Body of pancreas (tissue), 4 donors: ENCODE measurements at regions of chr16 and their contacts with region 1.

Region 1: DNA sequence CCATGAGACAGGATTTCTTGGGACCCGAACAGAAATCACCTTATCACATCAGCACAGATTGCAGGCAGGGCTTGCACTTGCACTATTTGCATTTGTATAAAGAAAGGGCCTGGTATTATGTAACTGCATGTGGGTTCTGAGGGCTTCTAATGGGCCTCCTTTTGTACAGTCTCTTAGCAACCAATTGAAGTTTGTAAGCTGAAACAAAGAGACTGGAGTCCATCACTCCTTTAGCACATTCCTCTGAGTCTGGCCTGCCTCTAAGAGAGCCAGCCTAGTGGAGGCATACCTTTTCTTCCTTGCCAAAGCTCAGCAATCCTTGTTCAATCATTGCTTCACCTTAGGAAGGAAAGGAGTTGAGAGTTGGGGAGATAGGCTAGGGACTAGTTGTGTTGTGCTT is 387.1 kb downstream of the XYLT1 start:
- DNase-seq: no peak
- ATAC-seq: no peak
- H3K4me3 ChIP-seq: no peak overlapping the region
- H3K27ac ChIP-seq: no peak overlapping the region
- H3K4me1 ChIP-seq: no peaks in the 10 kb centered on the region
- H3K27me3 ChIP-seq: no peaks in the 10 kb centered on the region
- CTCF ChIP-seq: no peak
- POLR2A ChIP-seq: no peak

Region 2: GRCh38 chr16:17002565-17002964 is 81.1 kb before region 1 on chr16:
- intact Hi-C with region 1: no loop called
- DNase-seq: no peak
- ATAC-seq: no peak
- H3K4me3 ChIP-seq: no peak overlapping the region
- H3K27ac ChIP-seq: no peak overlapping the region
- H3K4me1 ChIP-seq: no peaks in the 10 kb centered on the region
- H3K27me3 ChIP-seq: no peaks in the 10 kb centered on the region
- CTCF ChIP-seq: no peak
- POLR2A ChIP-seq: no peak

Region 3: GRCh38 chr16:17038415-17038814 is 45.2 kb before region 1 on chr16:
- intact Hi-C with region 1: no loop called
- DNase-seq: no peak
- ATAC-seq: no peak
- H3K4me3 ChIP-seq: no peak overlapping the region
- H3K27ac ChIP-seq: no peak overlapping the region
- H3K4me1 ChIP-seq: no peaks in the 10 kb centered on the region
- H3K27me3 ChIP-seq: no peaks in the 10 kb centered on the region
- CTCF ChIP-seq: no peak
- POLR2A ChIP-seq: no peak

Region 4: DNA sequence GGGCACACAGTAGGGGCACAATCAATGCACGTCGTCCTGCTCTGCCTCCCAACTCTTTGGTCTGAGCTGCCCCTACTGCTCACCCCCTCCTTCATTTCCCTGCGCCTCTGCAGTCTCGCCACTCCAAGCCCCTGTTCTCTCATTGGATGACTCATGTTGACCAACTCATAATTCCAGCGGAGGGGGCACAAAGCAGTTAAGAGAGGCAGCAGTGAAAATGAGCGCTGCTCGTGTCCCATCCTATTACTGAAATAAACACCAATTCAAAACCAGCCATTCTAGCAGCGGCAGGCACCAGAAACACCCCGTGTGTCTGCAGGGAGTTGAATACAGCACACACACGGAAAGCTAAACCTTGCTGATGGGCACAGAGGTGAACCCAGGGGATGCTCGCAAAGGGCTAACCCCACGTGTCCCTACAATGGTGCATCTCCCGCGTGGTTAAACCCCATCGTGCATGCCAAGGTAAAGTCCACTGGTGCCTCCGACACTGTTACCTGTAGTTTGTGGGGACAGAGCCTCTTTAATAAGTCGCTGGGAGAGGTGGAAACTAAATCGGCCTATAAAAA is 76.7 kb after region 1 on chr16:
- intact Hi-C with region 1: loop called (anchors 10 kb)
- DNase-seq: no peak
- ATAC-seq: no peak
- H3K4me3 ChIP-seq: no peak overlapping the region
- H3K27ac ChIP-seq: no peak overlapping the region
- H3K4me1 ChIP-seq: no peaks in the 10 kb centered on the region
- H3K27me3 ChIP-seq: no peaks in the 10 kb centered on the region
- CTCF ChIP-seq: no peak
- POLR2A ChIP-seq: no peak